ENCODE measurements at regions of chr2 and their contacts with region 1.

Region 1: DNA sequence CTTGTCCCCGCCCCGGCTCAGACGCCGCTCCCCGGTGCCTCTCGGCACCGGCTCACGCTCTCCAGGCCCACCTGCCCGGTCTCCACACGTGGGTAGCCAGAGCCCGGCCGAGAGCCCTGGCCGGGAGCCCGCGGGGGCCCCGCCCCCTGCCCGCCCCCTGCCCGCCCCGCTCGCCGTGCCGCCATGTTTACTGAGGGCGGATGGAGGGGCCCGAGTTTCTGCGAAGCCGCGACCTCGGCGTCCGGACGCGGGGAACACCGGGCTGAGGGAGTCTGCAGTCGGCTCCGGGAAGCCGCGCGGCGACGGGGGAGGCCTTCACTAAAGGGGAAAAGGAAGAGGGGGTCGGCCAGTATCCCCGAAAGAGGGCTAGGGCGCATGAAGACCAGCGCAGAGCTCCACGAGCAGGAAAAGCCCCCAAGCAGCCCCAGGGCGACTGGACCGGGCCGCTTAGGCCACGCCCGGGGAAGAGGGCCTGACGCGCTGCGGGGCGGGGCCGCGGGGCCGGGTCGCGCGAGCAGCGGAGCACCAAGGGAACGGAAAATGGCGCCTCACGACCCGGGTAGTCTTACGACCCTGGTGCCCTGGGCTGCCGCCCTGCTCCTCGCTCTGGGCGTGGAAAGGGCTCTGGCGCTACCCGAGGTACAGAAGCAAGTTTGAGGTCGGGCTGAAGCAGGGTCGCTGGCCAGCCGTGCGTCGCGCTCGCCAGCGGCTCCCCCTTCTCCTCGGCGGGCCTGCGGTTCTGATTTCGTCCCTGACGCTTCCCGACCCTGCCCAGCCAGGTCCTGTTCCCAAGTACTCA is at the starts of genes ATRAID and SLC5A6:
- DNase-seq: peak; percentile 95
- ATAC-seq: peak; percentile 90
- H3K4me3 ChIP-seq: peak within 1 kb of the TSS; percentile 72 to 100 (median 90)
- H3K4me3 Mint-ChIP-seq: peak within 1 kb of the TSS; percentile 86
- H3K27ac ChIP-seq: peak within 1 kb of the TSS; percentile 100
- H3K27ac Mint-ChIP-seq: peak within 1 kb of the TSS; percentile 92
- H3K4me1 ChIP-seq: peaks cover 18 to 19% of the 10 kb centered on the region in 2 donors
- H3K4me1 Mint-ChIP-seq: peaks cover 33% of the 10 kb centered on the region
- H3K27me3 ChIP-seq: no peaks in the 10 kb centered on the region
- H3K27me3 Mint-ChIP-seq: no peaks in the 10 kb centered on the region
- CTCF ChIP-seq: no peak
- total RNA-seq, gene ATRAID: 88.8 and 89.9 TPM in 2 replicates
- total RNA-seq, gene SLC5A6: 46.1 and 50.8 TPM in 2 replicates

Region 2: DNA sequence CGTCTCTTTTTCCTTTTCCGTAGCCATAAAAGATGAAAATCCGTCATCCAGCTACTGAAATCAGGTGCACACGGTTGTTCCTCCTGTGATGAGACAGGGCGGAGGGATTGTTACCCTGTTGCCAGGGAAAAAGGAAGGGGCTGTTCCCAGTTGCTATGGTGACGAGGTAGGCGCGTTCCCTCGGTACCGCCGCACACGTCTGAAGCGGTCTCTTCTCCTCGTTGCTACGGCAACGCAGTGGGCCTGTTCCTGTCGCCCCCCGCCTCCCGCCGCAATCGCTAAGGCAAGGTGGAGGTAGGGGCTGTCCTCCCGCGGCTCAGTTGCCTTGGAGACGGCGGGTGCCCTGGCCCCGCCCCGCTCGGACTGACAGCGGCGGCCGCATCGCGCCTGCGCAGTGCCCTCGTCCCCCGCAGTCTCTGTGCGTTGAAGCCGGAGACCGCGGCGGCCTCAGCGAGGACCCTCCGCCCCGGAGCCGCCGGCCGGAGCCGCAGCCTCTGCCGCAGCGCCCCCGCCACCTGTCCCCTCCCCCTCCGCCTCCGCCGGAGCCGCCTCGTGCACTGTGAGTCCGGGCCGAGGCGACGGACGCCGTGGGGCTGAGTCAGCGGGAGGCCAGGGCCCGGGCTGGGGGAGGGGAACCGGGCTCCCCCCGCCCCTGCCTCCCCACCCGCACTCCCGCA is 241.6 kb before region 1 on chr2 and contains the start of gene MAPRE3:
- CTCF ChIA-PET with region 1: no interaction called
- POLR2A ChIA-PET with region 1: no interaction called
- intact Hi-C with region 1: loop called (anchors 1 kb)
- DNase-seq: peak; percentile 92
- ATAC-seq: peak; percentile 94
- H3K4me3 ChIP-seq: peak within 1 kb of the TSS; percentile 59 to 70 (median 62)
- H3K4me3 Mint-ChIP-seq: peak within 1 kb of the TSS; percentile 91
- H3K27ac ChIP-seq: peak within 1 kb of the TSS in 1 of 2 donors; percentile 47
- H3K27ac Mint-ChIP-seq: peak within 1 kb of the TSS; percentile 59
- H3K4me1 ChIP-seq: peaks cover 11 to 12% of the 10 kb centered on the region in 2 donors
- H3K4me1 Mint-ChIP-seq: peaks cover 19% of the 10 kb centered on the region
- H3K27me3 ChIP-seq: peaks cover 2 to 11% (median 5%) of the 10 kb centered on the region in 4 experiments
- H3K27me3 Mint-ChIP-seq: peaks cover 26% of the 10 kb centered on the region
- CTCF ChIP-seq: no peak
- total RNA-seq, gene MAPRE3: 5.4 and 7.1 TPM in 2 replicates

Region 3: DNA sequence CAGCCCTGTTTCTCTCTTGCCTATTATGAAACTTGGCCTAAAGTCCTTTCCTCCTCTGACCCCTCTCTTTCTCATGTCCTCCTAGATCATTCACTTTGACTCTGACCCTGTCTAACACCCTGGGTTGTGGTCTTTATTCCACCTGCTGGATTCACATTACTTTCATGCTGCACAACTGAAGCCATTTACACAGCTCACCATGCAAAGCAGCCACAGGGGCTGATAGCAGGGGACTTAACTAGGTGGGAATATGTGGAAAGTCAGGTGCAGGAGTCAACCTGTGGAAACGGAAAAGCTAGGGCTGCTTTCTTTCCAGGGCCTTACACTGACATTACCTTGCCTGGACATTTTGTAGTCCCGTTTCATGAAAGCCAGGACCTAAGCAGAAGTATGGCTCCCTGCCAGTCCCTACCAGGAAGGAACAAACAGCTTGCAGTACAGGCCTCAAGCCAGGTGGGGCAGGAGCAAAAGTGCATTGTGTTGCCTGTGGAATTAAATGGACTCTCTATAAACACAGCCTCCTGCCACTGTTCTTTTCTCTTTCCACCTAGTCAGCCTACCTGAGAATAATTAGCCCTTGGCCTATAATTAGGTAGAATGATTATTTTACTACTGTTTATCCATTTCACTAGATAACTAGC is 229.8 kb before region 1 on chr2:
- CTCF ChIA-PET with region 1: no interaction called
- POLR2A ChIA-PET with region 1: no interaction called
- intact Hi-C with region 1: no loop called
- DNase-seq: peak; percentile 40
- ATAC-seq: peak; percentile 43
- H3K4me3 ChIP-seq: no peak overlapping the region
- H3K4me3 Mint-ChIP-seq: no peak overlapping the region
- H3K27ac ChIP-seq: no peak overlapping the region
- H3K27ac Mint-ChIP-seq: no peak overlapping the region
- H3K4me1 ChIP-seq: no peaks in the 10 kb centered on the region
- H3K4me1 Mint-ChIP-seq: no peaks in the 10 kb centered on the region
- H3K27me3 ChIP-seq: peaks cover 0 to 9% (median 2%) of the 10 kb centered on the region in 4 experiments
- H3K27me3 Mint-ChIP-seq: peaks cover 24% of the 10 kb centered on the region
- CTCF ChIP-seq: peak; percentile 19

Region 4: DNA sequence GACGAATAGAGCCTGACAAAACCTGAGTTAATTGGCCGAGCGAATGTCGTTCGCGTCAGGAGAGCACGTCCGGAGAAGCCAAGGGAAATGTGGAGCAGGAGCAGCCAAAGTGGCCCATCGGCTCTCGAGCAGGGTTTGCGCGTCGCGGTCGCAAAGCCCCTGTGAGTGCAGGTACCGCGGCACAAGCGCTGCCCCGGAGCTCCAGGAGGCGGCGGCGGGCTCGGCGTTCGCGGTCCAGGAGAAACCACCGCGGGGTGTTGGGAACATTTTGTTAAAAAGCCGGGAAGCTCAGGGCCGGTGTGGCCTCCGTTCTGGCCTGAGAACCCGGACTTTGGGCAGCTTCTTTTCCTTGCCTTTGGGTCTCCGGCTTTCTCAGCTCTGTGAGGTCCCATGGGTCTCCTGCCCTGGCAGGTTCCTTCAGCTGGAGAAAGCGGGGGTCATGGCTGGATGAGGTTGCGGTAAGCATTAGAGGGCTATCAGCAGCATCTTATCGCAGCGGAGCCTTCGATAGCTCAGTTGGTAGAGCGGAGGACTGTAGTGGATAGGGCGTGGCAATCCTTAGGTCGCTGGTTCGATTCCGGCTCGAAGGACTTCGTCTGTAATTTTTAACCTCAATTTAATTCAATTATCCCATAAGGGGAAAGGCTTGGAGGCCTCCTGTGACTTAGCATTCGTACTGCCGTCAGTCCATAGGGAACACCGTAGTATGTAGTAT is 161.6 kb before region 1 on chr2:
- CTCF ChIA-PET with region 1: no interaction called
- POLR2A ChIA-PET with region 1: interaction called, 3 read pairs
- intact Hi-C with region 1: loop called (anchors 1 kb)
- DNase-seq: peak; percentile 98
- ATAC-seq: peak; percentile 60
- H3K4me3 ChIP-seq: peak overlapping the region; percentile 57 to 94 (median 81)
- H3K4me3 Mint-ChIP-seq: peak overlapping the region; percentile 95
- H3K27ac ChIP-seq: peak overlapping the region; percentile 72 to 80
- H3K27ac Mint-ChIP-seq: peak overlapping the region; percentile 100
- H3K4me1 ChIP-seq: peaks cover 4 to 15% of the 10 kb centered on the region in 2 donors
- H3K4me1 Mint-ChIP-seq: peaks cover 17% of the 10 kb centered on the region
- H3K27me3 ChIP-seq: no peaks in the 10 kb centered on the region
- H3K27me3 Mint-ChIP-seq: peaks cover 7% of the 10 kb centered on the region
- CTCF ChIP-seq: peak; percentile 50

Region 5: DNA sequence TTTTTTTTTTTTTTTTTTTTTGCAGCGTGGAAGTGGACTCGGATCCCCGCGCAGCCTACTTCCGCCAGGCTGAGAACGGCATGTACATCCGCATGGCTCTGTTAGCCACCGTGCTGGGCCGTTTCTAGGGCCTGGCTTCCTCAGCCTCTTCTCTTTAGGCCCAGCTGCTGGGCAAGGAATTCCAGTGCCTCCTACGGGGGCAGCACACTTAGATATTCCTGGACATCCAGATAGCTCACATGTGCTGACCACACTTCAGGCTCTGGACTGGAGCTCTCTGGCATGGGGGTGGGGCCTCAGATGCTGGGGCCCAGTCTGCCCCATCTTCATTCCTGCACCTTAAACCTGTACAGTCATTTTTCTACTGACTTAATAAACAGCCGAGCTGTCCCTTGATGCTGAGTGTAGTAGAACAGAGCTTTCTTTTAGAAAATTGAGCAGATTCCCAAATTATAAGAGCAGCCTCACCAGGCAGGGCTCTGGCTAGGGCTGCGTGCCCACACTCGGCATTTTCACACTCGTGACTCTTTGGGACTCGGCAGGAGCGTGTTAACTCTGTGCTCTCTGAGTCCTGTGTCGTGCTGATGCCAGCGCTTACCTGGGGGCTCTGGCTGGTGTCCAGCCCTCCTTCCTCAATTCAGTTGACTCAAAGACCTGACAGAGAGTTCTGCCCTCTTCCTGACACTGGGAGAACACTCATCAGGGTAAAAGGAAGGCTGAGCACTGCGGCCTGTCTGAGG is 31.5 kb after region 1 on chr2:
- CTCF ChIA-PET with region 1: no interaction called
- POLR2A ChIA-PET with region 1: interaction called, 15 read pairs
- intact Hi-C with region 1: no loop called
- DNase-seq: no peak
- ATAC-seq: no peak
- H3K4me3 ChIP-seq: no peak overlapping the region
- H3K4me3 Mint-ChIP-seq: no peak overlapping the region
- H3K27ac ChIP-seq: no peak overlapping the region
- H3K27ac Mint-ChIP-seq: no peak overlapping the region
- H3K4me1 ChIP-seq: no peaks in the 10 kb centered on the region
- H3K4me1 Mint-ChIP-seq: no peaks in the 10 kb centered on the region
- H3K27me3 ChIP-seq: no peaks in the 10 kb centered on the region
- H3K27me3 Mint-ChIP-seq: peaks cover 5% of the 10 kb centered on the region
- CTCF ChIP-seq: no peak

Region 6: DNA sequence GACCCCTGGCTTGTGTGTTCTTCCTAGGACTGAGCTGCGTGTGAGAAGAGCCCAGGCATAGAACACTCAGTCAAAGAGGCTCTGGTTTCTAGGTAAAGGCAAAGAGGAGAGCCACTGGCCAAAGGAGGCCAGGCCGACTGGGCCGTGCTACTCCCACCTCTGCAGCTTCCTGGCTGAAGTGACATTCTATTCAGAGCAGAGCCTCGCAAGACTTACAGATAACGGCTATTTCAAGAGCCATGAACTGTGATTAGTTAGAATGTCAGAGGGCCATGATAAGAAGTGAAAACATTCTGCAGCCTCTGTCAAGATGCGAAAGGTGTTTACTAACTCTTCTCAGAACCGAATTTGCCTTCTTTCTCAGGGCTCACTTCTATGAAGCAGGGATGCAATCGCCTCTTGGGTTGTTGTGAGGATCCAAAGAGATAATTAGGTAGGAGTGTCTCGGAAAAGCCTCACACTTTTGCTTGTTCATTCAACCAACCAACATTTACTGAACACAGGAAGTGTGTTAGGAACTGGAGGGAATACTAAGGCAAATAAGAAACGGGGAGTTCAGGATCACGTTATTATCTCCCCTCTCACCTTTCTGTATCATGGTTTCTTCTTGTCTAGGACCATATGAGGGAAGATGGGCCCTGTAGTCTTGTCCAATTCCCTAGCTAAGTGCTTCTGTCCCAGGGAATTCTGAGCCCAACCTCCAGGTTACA is 59.8 kb after region 1 on chr2:
- CTCF ChIA-PET with region 1: no interaction called
- POLR2A ChIA-PET with region 1: no interaction called
- intact Hi-C with region 1: no loop called
- DNase-seq: no peak
- ATAC-seq: no peak
- H3K4me3 ChIP-seq: no peak overlapping the region
- H3K4me3 Mint-ChIP-seq: no peak overlapping the region
- H3K27ac ChIP-seq: no peak overlapping the region
- H3K27ac Mint-ChIP-seq: no peak overlapping the region
- H3K4me1 ChIP-seq: no peaks in the 10 kb centered on the region
- H3K4me1 Mint-ChIP-seq: no peaks in the 10 kb centered on the region
- H3K27me3 ChIP-seq: peaks cover 0 to 18% (median 6%) of the 10 kb centered on the region in 4 experiments
- H3K27me3 Mint-ChIP-seq: peaks cover 33% of the 10 kb centered on the region
- CTCF ChIP-seq: no peak